Activated CD4-positive, alpha-beta T cell treated with anti-CD3 and anti-CD28 coated beads for 36 hours (primary cell): ENCODE measurements at regions of chrX and their contacts with region 1.

Region 1: DNA sequence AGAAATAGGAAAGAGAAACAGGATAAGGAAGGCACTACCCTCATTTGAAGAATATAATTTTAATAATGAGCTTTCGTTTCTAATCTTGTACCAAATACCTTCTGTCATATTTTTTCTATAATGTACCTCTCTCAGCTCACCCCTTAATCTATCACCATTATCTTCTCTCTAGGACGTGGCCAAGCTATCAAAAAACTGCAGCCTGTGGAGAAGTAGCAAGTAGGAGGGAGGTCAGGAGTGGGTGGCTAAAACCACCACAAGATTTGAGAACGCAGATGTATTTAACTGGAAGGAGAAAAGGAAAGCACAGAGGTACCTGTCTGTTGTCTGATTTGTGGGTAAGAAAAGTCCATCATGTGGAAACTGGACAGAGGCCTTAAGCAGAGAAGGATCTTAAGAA is 576.7 kb upstream of the DIPK2B start:
- DNase-seq: no peak
- ATAC-seq: no peak
- H3K4me3 Mint-ChIP-seq: no peak overlapping the region
- H3K27ac Mint-ChIP-seq: peak overlapping the region; percentile 82
- H3K4me1 Mint-ChIP-seq: peaks cover 86% of the 10 kb centered on the region
- H3K27me3 Mint-ChIP-seq: no peaks in the 10 kb centered on the region

Region 2: DNA sequence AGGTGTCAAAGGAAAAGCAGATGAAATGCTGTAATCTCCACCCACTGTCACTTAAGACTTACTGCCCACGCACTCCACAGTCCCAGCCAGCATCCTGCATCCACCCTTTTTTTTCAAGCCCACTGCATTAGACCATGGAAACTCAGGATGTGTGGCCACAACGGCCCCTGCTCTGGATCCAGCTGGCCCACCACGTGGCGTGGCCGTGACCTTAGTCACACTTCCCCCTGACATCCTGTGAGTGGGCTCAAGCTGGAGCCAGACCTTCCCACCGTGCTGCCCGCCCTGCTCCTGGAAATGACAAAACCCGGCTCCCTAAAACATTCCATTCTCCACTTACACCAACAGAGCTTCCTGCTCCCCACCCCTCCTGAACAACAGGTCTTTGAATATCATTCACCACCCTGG is 11.6 kb after region 1 on chrX:
- CTCF ChIA-PET with region 1: no interaction called
- POLR2A ChIA-PET with region 1: interaction called, 3 read pairs
- intact Hi-C with region 1: loop called in 1 of 2 experiments (anchors 2 kb)
- DNase-seq: no peak
- ATAC-seq: no peak
- H3K4me3 Mint-ChIP-seq: no peak overlapping the region
- H3K27ac Mint-ChIP-seq: peak overlapping the region; percentile 80
- H3K4me1 Mint-ChIP-seq: peaks cover 69% of the 10 kb centered on the region
- H3K27me3 Mint-ChIP-seq: no peaks in the 10 kb centered on the region

Region 3: GRCh38 chrX:46044486-46044885 is 267.1 kb after region 1 on chrX:
- CTCF ChIA-PET with region 1: no interaction called
- POLR2A ChIA-PET with region 1: no interaction called
- intact Hi-C with region 1: no loop called
- DNase-seq: no peak
- ATAC-seq: no peak
- H3K4me3 Mint-ChIP-seq: no peak overlapping the region
- H3K27ac Mint-ChIP-seq: no peak overlapping the region
- H3K4me1 Mint-ChIP-seq: peaks cover 5% of the 10 kb centered on the region
- H3K27me3 Mint-ChIP-seq: no peaks in the 10 kb centered on the region

Region 4: DNA sequence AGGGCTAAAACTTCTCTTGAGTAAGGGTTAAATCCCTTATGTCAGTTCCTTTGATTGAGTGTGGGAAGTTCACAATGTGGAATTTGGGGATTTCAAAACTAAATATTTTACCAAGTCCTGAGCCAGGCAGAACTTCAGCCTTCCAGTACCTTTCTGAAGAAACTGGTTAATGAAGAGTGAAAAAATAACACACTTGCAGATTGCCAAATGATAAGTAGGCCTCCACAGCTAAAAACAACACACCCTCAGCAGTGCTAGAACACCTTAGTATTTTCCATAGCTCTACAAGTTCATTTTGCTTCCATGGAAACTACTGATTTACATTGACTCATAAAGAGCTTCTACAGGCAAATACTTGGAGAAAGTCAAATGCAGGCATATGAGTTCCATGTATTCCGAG is 441.0 kb after region 1 on chrX:
- CTCF ChIA-PET with region 1: no interaction called
- POLR2A ChIA-PET with region 1: no interaction called
- intact Hi-C with region 1: no loop called
- DNase-seq: no peak
- ATAC-seq: no peak
- H3K4me3 Mint-ChIP-seq: no peak overlapping the region
- H3K27ac Mint-ChIP-seq: no peak overlapping the region
- H3K4me1 Mint-ChIP-seq: no peaks in the 10 kb centered on the region
- H3K27me3 Mint-ChIP-seq: no peaks in the 10 kb centered on the region